CD8-positive, alpha-beta T cell (primary cell): ENCODE measurements at regions of chr17 and their contacts with region 1.

Region 1: GRCh38 chr17:35879773-35880654 is at the start of gene CCL5:
- DNase-seq: peak in 7 of 9 experiments; percentile 38 to 91 (median 62)
- ATAC-seq: peak; percentile 73
- H3K4me3 ChIP-seq: peak within 1 kb of the TSS; percentile 28 to 92
- H3K4me3 Mint-ChIP-seq: peak within 1 kb of the TSS; percentile 93
- H3K27ac ChIP-seq: peak within 1 kb of the TSS; percentile 56 to 95
- H3K27ac Mint-ChIP-seq: peak within 1 kb of the TSS; percentile 95
- H3K4me1 ChIP-seq: peaks cover 18% of the 10 kb centered on the region
- H3K4me1 Mint-ChIP-seq: peaks cover 37% of the 10 kb centered on the region
- H3K27me3 ChIP-seq: no peaks in the 10 kb centered on the region
- H3K27me3 Mint-ChIP-seq: no peaks in the 10 kb centered on the region
- CTCF ChIP-seq: no peak
- total RNA-seq, gene CCL5: 398 to 442 TPM

Region 2: GRCh38 chr17:35578197-35578928 is 301.7 kb before region 1 on chr17 and contains the start of gene PEX12:
- CTCF ChIA-PET with region 1: no interaction called
- POLR2A ChIA-PET with region 1: no interaction called
- intact Hi-C with region 1: no loop called
- DNase-seq: peak; percentile 70 to 96 (median 89)
- ATAC-seq: peak; percentile 93
- H3K4me3 ChIP-seq: peak within 1 kb of the TSS; percentile 69 to 88
- H3K4me3 Mint-ChIP-seq: peak within 1 kb of the TSS; percentile 93
- H3K27ac ChIP-seq: peak within 1 kb of the TSS; percentile 88 to 94
- H3K27ac Mint-ChIP-seq: peak within 1 kb of the TSS; percentile 98
- H3K4me1 ChIP-seq: peaks cover 18% of the 10 kb centered on the region
- H3K4me1 Mint-ChIP-seq: peaks cover 29% of the 10 kb centered on the region
- H3K27me3 ChIP-seq: no peaks in the 10 kb centered on the region
- H3K27me3 Mint-ChIP-seq: no peaks in the 10 kb centered on the region
- CTCF ChIP-seq: no peak
- total RNA-seq, gene PEX12: 2.7 to 3.2 TPM

Region 3: GRCh38 chr17:35889818-35890763 is 10.1 kb after region 1 on chr17:
- CTCF ChIA-PET with region 1: interaction called, 5 read pairs
- POLR2A ChIA-PET with region 1: interaction called, 98 read pairs
- intact Hi-C with region 1: loop called (anchors 1 to 2 kb)
- DNase-seq: peak in 2 of 9 experiments; percentile 51 to 73
- ATAC-seq: peak; percentile 30
- H3K4me3 ChIP-seq: no peak overlapping the region
- H3K4me3 Mint-ChIP-seq: peak overlapping the region; percentile 49
- H3K27ac ChIP-seq: peak overlapping the region in 1 of 2 experiments; percentile 72
- H3K27ac Mint-ChIP-seq: peak overlapping the region; percentile 91
- H3K4me1 ChIP-seq: peaks cover 44% of the 10 kb centered on the region
- H3K4me1 Mint-ChIP-seq: peaks cover 57% of the 10 kb centered on the region
- H3K27me3 ChIP-seq: no peaks in the 10 kb centered on the region
- H3K27me3 Mint-ChIP-seq: no peaks in the 10 kb centered on the region
- CTCF ChIP-seq: no peak

Region 4: GRCh38 chr17:35898283-35899070 is 18.5 kb after region 1 on chr17:
- CTCF ChIA-PET with region 1: interaction called, 4 read pairs
- POLR2A ChIA-PET with region 1: interaction called, 98 read pairs
- intact Hi-C with region 1: loop called (anchors 2 kb)
- DNase-seq: peak in 5 of 9 experiments; percentile 46 to 75 (median 68)
- ATAC-seq: peak; percentile 51
- H3K4me3 ChIP-seq: peak overlapping the region in 1 of 2 experiments; percentile 12
- H3K4me3 Mint-ChIP-seq: peak overlapping the region; percentile 27
- H3K27ac ChIP-seq: peak overlapping the region; percentile 5 to 81
- H3K27ac Mint-ChIP-seq: peak overlapping the region; percentile 91
- H3K4me1 ChIP-seq: peaks cover 49% of the 10 kb centered on the region
- H3K4me1 Mint-ChIP-seq: peaks cover 65% of the 10 kb centered on the region
- H3K27me3 ChIP-seq: no peaks in the 10 kb centered on the region
- H3K27me3 Mint-ChIP-seq: no peaks in the 10 kb centered on the region
- CTCF ChIP-seq: no peak

Region 5: GRCh38 chr17:35915153-35915969 is 35.3 kb after region 1 on chr17:
- CTCF ChIA-PET with region 1: interaction called, 4 read pairs
- POLR2A ChIA-PET with region 1: interaction called, 4 read pairs
- intact Hi-C with region 1: loop called in 1 of 2 experiments (anchors 5 kb)
- DNase-seq: no peak
- ATAC-seq: no peak
- H3K4me3 ChIP-seq: no peak overlapping the region
- H3K4me3 Mint-ChIP-seq: no peak overlapping the region
- H3K27ac ChIP-seq: no peak overlapping the region
- H3K27ac Mint-ChIP-seq: no peak overlapping the region
- H3K4me1 ChIP-seq: no peaks in the 10 kb centered on the region
- H3K4me1 Mint-ChIP-seq: peaks cover 39% of the 10 kb centered on the region
- H3K27me3 ChIP-seq: no peaks in the 10 kb centered on the region
- H3K27me3 Mint-ChIP-seq: no peaks in the 10 kb centered on the region
- CTCF ChIP-seq: no peak

Region 6: GRCh38 chr17:35930211-35931065 is 50.4 kb after region 1 on chr17 and contains the start of gene RDM1:
- CTCF ChIA-PET with region 1: interaction called, 3 read pairs
- POLR2A ChIA-PET with region 1: interaction called, 6 read pairs
- intact Hi-C with region 1: loop called (anchors 2 to 5 kb)
- DNase-seq: peak; percentile 61 to 89 (median 75)
- ATAC-seq: peak; percentile 96
- H3K4me3 ChIP-seq: peak within 1 kb of the TSS; percentile 60 to 64
- H3K4me3 Mint-ChIP-seq: peak within 1 kb of the TSS; percentile 83
- H3K27ac ChIP-seq: no peak within 1 kb of the TSS
- H3K27ac Mint-ChIP-seq: peak within 1 kb of the TSS; percentile 57
- H3K4me1 ChIP-seq: peaks cover 9% of the 10 kb centered on the region
- H3K4me1 Mint-ChIP-seq: peaks cover 18% of the 10 kb centered on the region
- H3K27me3 ChIP-seq: no peaks in the 10 kb centered on the region
- H3K27me3 Mint-ChIP-seq: no peaks in the 10 kb centered on the region
- CTCF ChIP-seq: no peak
- total RNA-seq, gene RDM1: 0.27 TPM in 1 of 2 experiments, not detected in the other